Colonic mucosa (tissue), 4 donors: ENCODE measurements at regions of chr5 and their contacts with region 1.

Region 1: DNA sequence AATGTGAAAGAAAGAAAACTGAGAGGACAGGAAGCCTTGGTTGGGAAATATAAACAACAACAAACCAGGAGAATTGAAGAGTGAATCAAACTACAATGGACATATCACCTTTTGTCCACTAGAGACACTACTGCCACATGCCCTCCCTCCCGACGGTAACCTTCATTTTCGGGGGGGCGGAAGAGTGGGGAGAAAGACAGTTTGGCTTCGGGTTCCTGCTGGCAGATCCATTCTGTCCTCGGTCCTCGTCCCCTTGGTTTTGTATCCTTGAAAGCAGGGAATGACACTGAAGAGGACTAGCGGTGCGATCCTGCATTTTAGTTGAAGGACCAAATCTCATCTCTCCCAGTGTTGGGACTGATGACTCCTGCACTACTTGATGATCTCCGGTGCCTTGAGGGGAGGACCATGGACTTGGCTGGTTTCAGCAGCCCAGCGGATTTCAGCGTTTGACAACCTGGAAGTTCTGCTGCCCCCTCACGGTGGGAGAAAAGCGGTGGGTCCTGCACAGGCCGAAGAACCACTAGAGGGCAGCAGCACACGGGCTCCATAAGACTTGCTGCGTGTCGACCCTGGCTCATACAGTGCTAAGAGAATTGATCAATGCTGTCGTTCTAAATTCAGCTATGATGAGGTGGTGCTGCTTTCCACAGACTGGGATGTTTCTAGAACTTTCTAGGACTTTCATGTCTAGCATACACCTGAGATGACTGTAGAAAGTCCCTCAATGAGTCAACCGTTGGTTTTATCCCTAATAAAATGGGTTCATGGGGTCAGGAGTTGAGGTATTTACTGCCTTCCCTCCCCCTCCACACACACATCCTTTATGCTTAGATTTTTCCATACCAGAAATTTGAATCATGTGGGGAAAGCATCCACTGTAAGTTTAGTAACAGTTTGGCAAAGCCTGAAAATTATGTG is 15.1 kb upstream of the ZNF131 start:
- DNase-seq: peak; percentile 90
- H3K4me3 ChIP-seq: peak overlapping the region; percentile 38
- H3K27ac ChIP-seq: peak overlapping the region; percentile 59
- H3K4me1 ChIP-seq: no peaks in the 10 kb centered on the region
- H3K27me3 ChIP-seq: no peaks in the 10 kb centered on the region
- CTCF ChIP-seq: peak; percentile 100

Region 2: GRCh38 chr5:42994246-42995151 is 111.1 kb before region 1 on chr5:
- intact Hi-C with region 1: loop called (anchors 10 kb)
- DNase-seq: peak; percentile 90
- H3K4me3 ChIP-seq: peak overlapping the region; percentile 25
- H3K27ac ChIP-seq: peak overlapping the region; percentile 83
- H3K4me1 ChIP-seq: no peaks in the 10 kb centered on the region
- H3K27me3 ChIP-seq: peaks cover 20% of the 10 kb centered on the region
- CTCF ChIP-seq: peak; percentile 89

Region 3: GRCh38 chr5:43073597-43074546 is 31.8 kb before region 1 on chr5:
- intact Hi-C with region 1: loop called (anchors 5 kb)
- DNase-seq: peak; percentile 68
- H3K4me3 ChIP-seq: no peak overlapping the region
- H3K27ac ChIP-seq: no peak overlapping the region
- H3K4me1 ChIP-seq: peaks cover 6% of the 10 kb centered on the region
- H3K27me3 ChIP-seq: no peaks in the 10 kb centered on the region
- CTCF ChIP-seq: peak; percentile 55

Region 4: GRCh38 chr5:43152946-43153345 is 47.3 kb after region 1 on chr5:
- intact Hi-C with region 1: no loop called
- DNase-seq: no peak
- H3K4me3 ChIP-seq: no peak overlapping the region
- H3K27ac ChIP-seq: no peak overlapping the region
- H3K4me1 ChIP-seq: no peaks in the 10 kb centered on the region
- H3K27me3 ChIP-seq: no peaks in the 10 kb centered on the region
- CTCF ChIP-seq: no peak

Region 5: DNA sequence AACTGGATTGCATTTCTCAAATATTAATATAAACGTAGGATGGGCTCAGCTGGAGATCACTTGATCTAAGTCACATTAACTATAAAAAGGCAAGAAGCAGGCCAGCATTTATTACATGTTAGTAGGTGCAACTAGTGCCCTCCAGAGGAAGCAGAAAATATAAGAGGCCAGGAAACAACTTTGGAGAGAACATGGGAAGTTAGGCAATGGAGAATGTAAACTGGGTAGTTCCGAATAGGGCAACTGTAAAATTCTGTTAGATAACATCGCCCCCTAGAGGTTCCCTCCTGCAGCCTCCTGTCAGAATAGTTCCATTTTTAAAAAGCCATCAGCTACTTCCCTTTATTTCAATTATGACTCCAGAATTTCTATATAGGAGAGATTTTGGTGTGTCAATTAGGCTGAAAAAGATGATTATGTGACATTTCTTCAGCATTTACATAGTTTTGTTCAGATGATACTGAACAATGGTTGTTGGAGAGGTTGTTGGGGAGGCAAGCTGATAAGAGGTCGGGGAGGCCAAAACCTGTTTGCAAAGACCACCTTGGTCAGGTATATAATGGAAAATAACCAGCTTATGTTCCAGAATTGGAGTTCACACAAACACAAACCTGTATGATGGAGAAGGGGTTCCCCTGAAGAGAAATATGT is 284.2 kb after region 1 on chr5:
- intact Hi-C with region 1: loop called (anchors 5 kb)
- DNase-seq: peak; percentile 61
- H3K4me3 ChIP-seq: no peak overlapping the region
- H3K27ac ChIP-seq: no peak overlapping the region
- H3K4me1 ChIP-seq: no peaks in the 10 kb centered on the region
- H3K27me3 ChIP-seq: no peaks in the 10 kb centered on the region
- CTCF ChIP-seq: peak; percentile 84

Region 6: GRCh38 chr5:43699910-43700309 is 594.3 kb after region 1 on chr5:
- intact Hi-C with region 1: no loop called
- DNase-seq: no peak
- H3K4me3 ChIP-seq: no peak overlapping the region
- H3K27ac ChIP-seq: no peak overlapping the region
- H3K4me1 ChIP-seq: no peaks in the 10 kb centered on the region
- H3K27me3 ChIP-seq: no peaks in the 10 kb centered on the region
- CTCF ChIP-seq: no peak